ENCODE measurements at regions of chr2 and their contacts with region 1.

Region 1: DNA sequence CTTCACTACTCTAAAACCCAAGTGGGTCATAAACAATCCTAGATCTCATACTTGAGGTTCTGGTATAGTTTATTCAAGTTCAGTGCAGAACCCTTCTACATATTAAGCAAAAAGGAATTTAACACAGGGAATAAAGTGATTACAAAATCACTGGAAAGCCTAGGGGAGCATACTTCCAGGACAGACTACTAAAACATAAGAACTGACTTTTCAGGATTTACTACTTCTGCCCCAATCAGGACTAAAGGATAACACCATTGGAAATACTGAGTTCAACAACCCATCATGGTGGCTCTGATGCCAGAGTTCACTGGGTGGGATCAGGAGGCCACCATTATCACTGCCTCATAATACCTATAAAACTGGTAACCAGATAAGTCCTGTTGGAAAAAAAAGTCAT is 123.6 kb downstream of the DNAH7 start:
- DNase-seq: no peak
- H3K4me3 ChIP-seq: no peak overlapping the region
- H3K27ac ChIP-seq: no peak overlapping the region
- H3K4me1 ChIP-seq: no peaks in the 10 kb centered on the region
- H3K27me3 ChIP-seq: no peaks in the 10 kb centered on the region
- CTCF ChIP-seq: no peak
- POLR2A ChIP-seq: no peak

Region 2: DNA sequence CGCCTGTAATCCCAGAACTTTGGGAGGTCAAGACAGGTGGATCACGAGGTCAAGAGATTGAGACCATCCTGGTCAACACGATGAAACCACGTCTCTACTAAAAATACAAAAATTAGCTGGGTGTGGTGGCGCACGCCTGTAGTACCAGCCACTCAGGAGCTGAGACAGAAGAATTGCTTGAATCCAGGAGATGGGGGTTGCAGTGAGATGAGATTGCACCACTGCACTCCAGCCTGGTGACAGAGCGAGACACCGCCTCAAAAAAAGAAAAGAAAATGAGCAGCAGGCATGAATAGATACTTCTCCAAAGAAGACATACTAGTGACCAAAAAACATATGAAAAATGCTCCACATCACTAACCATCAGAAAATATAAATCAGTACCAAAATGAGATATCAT is 15.0 kb before region 1 on chr2:
- intact Hi-C with region 1: loop called (anchors 2 kb)
- DNase-seq: no peak
- H3K4me3 ChIP-seq: no peak overlapping the region
- H3K27ac ChIP-seq: no peak overlapping the region
- H3K4me1 ChIP-seq: no peaks in the 10 kb centered on the region
- H3K27me3 ChIP-seq: no peaks in the 10 kb centered on the region
- CTCF ChIP-seq: no peak
- POLR2A ChIP-seq: no peak

Region 3: DNA sequence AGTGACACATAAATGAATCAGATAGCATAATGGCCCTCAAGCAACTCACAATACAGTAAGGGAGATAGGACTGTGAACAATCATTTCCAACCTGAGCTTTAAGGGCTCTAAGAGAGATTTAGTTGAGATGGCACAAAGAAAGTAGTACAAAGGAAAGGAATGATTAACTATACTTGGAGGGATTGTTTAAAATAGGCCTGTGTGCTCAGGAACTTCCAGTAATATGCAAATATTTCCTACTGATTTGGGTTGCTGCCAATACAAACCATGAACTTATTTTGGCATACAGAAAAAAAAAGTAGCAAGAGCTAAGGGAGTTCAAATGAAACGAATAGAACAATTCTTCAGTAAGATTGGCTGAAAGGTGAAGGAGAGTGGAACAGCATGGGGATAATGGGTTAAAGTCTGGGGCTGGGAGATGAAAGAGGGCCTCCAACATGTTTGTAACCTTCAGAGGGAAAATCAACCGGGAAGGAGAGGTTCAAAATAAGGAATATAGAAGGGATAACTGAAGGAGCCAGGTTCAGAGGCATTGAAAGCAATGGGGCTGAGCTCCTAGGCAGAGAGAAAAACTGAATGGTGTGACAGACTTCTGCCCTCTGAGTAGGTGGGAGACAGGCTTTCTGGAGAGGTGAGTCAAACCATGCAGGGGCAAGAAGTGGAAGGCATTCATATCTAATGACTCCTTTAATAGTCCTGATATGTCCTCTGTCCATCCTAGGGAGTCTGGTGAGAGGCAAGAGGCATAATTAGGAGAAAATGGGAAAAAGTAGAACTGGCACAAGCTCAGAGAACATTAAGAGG is 40.1 kb after region 1 on chr2:
- intact Hi-C with region 1: loop called (anchors 2 kb)
- DNase-seq: no peak
- H3K4me3 ChIP-seq: no peak overlapping the region
- H3K27ac ChIP-seq: no peak overlapping the region
- H3K4me1 ChIP-seq: no peaks in the 10 kb centered on the region
- H3K27me3 ChIP-seq: no peaks in the 10 kb centered on the region
- CTCF ChIP-seq: no peak
- POLR2A ChIP-seq: no peak